ENCODE measurements at regions of chr12 and their contacts with region 1.

Region 1: GRCh38 chr12:48795480-48796455 is 6.9 kb upstream of the ADCY6 start:
- DNase-seq: peak; percentile 77 to 84 (median 78)
- ATAC-seq: peak; percentile 93
- H3K4me3 ChIP-seq: no peak overlapping the region
- H3K27ac ChIP-seq: no peak overlapping the region
- H3K4me1 ChIP-seq: peaks cover 2 to 7% of the 10 kb centered on the region in 2 experiments; a peak in 2 of 5 replicates
- H3K27me3 ChIP-seq: peaks cover 5 to 14% of the 10 kb centered on the region in 2 experiments; a peak in 4 of 5 replicates
- CTCF ChIP-seq: peak; percentile 88 to 95 (median 94)
- EP300 ChIP-seq: no peak
- POLR2A ChIP-seq: no peak
- RAD21 ChIP-seq: peak; percentile 96 to 97

Region 2: GRCh38 chr12:48542300-48542928 is 253.4 kb before region 1 on chr12:
- CTCF ChIA-PET with region 1: interaction called, 18 read pairs
- POLR2A ChIA-PET with region 1: no interaction called
- in situ Hi-C with region 1: loop called (anchors 25 kb)
- intact Hi-C with region 1: loop called (anchors 1 kb)
- DNase-seq: peak; percentile 50 to 74 (median 54)
- ATAC-seq: peak; percentile 90
- H3K4me3 ChIP-seq: no peak overlapping the region
- H3K27ac ChIP-seq: no peak overlapping the region
- H3K4me1 ChIP-seq: peaks cover 0 to 4% of the 10 kb centered on the region in 2 experiments; a peak in 2 of 5 replicates
- H3K27me3 ChIP-seq: no peaks in the 10 kb centered on the region
- CTCF ChIP-seq: peak; percentile 88 to 96 (median 93)
- EP300 ChIP-seq: no peak
- POLR2A ChIP-seq: no peak
- RAD21 ChIP-seq: peak; percentile 99

Region 3: DNA sequence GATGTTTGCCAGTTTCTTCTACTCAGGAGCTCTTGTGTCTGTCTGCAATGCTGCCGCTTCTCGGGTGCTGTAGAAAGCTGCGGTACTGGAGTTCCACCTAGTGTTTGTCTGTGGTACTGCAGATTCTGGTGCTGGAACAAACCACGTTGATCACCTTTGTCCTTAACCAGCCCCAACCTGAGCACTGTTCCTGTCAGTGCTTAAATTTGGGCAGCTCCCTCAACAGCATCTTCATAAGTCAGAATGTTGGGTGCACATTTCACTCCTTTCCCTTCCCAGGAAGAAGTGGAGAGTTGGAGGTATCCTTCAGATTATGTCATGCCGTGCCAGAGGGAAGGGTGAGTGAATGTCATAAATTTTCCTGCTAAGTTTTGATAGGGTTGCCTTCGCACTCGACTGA is 177.2 kb before region 1 on chr12:
- CTCF ChIA-PET with region 1: no interaction called
- POLR2A ChIA-PET with region 1: no interaction called
- in situ Hi-C with region 1: no loop called
- intact Hi-C with region 1: loop called (anchors 1 kb)
- DNase-seq: peak; percentile 69 to 83 (median 78)
- ATAC-seq: peak; percentile 99
- H3K4me3 ChIP-seq: no peak overlapping the region
- H3K27ac ChIP-seq: no peak overlapping the region
- H3K4me1 ChIP-seq: no peaks in the 10 kb centered on the region; a peak in 2 of 5 replicates
- H3K27me3 ChIP-seq: no peaks in the 10 kb centered on the region
- CTCF ChIP-seq: peak; percentile 93 to 97 (median 96)
- EP300 ChIP-seq: no peak
- POLR2A ChIP-seq: no peak
- RAD21 ChIP-seq: peak; percentile 98 to 99

Region 4: DNA sequence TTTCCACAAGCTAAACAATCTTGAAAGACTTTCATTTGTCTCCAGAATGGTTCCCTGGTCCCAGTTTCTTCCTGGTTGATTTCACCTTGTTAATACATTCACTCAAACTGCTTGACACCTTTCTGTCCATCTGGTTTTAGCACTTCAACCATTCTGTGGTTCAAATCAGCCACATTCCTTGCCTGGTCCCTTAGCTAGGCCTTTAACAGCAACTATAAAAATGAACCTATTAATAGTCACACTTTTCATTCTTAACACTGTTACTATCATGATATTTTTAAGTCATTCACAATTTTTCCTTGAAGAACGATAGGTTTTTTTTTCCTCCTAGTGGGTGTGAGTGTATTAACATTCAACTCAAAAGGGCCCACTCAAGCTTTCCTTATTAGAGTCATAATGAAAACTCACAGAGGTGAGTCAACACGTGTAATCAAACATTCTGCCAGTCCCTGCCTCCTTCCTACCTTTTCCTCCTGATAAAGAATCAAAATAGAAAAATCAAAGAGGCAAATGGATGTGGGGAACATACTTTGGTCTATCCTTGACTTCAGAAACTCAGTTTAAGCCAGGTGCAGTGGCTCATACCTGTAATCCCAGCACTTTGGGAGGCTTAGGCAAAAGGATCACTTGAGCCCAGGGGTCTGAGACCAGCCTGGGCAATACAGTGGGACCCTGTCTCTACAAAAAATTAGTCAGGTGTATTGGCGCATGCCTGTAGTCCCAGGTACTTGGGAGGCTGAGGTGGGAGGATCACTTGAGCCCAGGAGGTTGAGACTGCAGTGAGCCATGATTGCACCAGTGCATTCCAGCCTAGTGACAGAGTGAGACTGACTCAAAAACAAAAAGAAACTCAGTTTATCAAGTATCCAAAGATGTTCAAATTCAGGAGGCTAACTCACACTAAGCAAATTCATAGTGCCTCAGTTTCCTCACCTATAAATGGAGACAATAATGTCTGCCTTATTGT is 44.7 kb before region 1 on chr12:
- CTCF ChIA-PET with region 1: interaction called, 40 read pairs
- POLR2A ChIA-PET with region 1: no interaction called
- in situ Hi-C with region 1: loop called (anchors 5 kb)
- intact Hi-C with region 1: loop called (anchors 1 kb)
- DNase-seq: no peak
- ATAC-seq: no peak
- H3K4me3 ChIP-seq: no peak overlapping the region
- H3K27ac ChIP-seq: no peak overlapping the region
- H3K4me1 ChIP-seq: no peaks in the 10 kb centered on the region; a peak in 1 of 5 replicates
- H3K27me3 ChIP-seq: no peaks in the 10 kb centered on the region; a peak in 2 of 5 replicates
- CTCF ChIP-seq: no peak
- EP300 ChIP-seq: no peak
- POLR2A ChIP-seq: no peak
- RAD21 ChIP-seq: no peak

Region 5: GRCh38 chr12:48758221-48758620 is 37.5 kb before region 1 on chr12:
- CTCF ChIA-PET with region 1: interaction called, 40 read pairs
- POLR2A ChIA-PET with region 1: no interaction called
- in situ Hi-C with region 1: loop called (anchors 5 kb)
- intact Hi-C with region 1: loop called (anchors 1 kb)
- DNase-seq: no peak
- ATAC-seq: peak; percentile 83
- H3K4me3 ChIP-seq: no peak overlapping the region
- H3K27ac ChIP-seq: no peak overlapping the region
- H3K4me1 ChIP-seq: no peaks in the 10 kb centered on the region
- H3K27me3 ChIP-seq: peaks cover 0 to 2% of the 10 kb centered on the region in 2 experiments; a peak in 4 of 5 replicates
- CTCF ChIP-seq: peak; percentile 21 to 39 (median 22); a peak in 2 of 6 replicates
- EP300 ChIP-seq: no peak
- POLR2A ChIP-seq: no peak
- RAD21 ChIP-seq: peak in 1 of 2 experiments; percentile 40; a peak in 1 of 4 replicates

Measured in K562 (cell line).